T-cell (primary cell): ENCODE measurements at regions of chr19 and their contacts with region 1.

Region 1: DNA sequence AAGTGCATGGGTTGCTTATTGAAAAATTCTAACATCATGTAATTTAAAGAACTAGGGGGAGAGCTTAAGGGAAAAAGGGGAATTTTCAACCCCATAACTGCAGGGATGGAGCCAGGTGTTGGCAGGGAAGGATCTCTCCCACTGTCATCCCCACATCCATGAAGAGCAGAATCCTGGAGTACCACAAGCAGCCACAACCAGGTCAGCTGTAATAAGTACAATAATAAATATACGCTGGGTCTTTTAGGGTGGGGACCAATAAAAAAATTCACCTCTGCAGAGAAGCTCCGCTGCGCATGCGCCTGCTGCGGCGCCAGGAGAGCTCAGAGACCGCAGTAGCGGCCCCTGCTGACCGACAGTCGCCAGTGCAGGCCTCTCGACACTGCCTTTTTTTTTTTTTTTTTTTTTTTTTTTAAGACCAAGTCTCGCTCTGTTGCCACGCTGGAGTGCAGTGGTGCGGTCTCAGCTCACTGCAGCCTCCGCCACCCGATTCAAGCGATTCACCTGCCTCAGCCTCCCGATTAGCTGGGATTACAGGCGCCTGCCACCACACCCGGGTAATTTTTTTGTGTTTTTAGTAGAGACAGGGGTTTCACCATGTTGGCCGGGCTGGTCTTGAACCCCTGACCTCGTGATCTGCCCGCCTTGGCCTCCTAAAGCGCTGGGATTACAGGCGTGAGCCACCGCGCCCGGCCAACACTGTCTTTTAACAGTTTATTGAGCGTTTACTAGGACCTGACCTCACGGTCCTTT is 2.5 kb upstream of the EEF2 start:
- DNase-seq: peak; percentile 78 to 96 (median 87)
- ATAC-seq: peak; percentile 29 to 50 (median 31)
- H3K4me3 ChIP-seq: peak overlapping the region; percentile 89 to 90
- H3K4me3 Mint-ChIP-seq: peak overlapping the region; percentile 75 to 95 (median 92)
- H3K27ac ChIP-seq: peak overlapping the region; percentile 52
- H3K27ac Mint-ChIP-seq: peak overlapping the region; percentile 82 to 85
- H3K4me1 ChIP-seq: peaks cover 26 to 52% of the 10 kb centered on the region in 2 experiments
- H3K4me1 Mint-ChIP-seq: peaks cover 48 to 52% (median 49%) of the 10 kb centered on the region in 3 donors
- H3K27me3 ChIP-seq: no peaks in the 10 kb centered on the region
- H3K27me3 Mint-ChIP-seq: no peaks in the 10 kb centered on the region

Region 2: DNA sequence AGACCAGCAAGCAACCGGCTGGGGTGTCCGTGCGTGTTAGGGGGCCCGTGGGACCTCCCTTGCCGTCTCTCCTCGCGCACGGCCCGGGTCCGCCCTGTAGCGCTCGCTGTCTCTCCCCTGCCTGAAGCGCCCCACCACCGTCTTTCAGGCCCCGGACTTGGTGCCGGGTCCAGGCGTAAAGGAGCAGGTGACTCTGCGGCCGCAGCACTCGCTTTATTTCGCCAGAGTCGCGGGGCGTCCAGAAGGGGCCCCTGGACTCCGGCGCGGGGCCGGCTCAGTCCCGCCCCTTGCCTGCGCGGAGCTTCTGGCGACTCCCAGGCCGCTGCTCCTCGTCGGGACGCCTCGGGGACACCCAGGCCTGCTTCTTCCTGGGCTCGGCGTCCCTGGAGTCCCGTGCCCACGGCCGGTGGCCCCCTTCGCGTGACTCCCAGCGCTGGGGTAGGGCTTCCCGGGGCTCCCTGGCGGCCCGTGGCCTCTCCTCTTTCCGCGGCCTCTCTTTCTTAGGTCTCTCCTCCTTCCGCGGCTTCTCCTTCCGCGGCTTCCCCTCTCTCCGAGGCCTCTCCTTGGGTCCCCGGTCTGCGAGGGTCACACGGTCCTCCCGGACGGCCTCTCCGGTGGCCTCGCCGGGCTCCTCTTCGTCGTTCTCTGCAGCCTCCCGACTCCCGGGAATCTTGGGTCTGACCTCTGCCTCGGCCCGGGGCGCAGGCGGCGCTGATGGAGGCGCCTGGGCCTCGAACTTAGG is 1735.6 kb before region 1 on chr19:
- CTCF ChIA-PET with region 1: interaction called in 1 of 2 experiments, 10 read pairs
- POLR2A ChIA-PET with region 1: no interaction called
- DNase-seq: no peak
- ATAC-seq: no peak
- H3K4me3 ChIP-seq: peak overlapping the region; percentile 52 to 67
- H3K4me3 Mint-ChIP-seq: peak overlapping the region; percentile 71 to 81 (median 73)
- H3K27ac ChIP-seq: no peak overlapping the region
- H3K27ac Mint-ChIP-seq: no peak overlapping the region
- H3K4me1 ChIP-seq: peaks cover 5 to 58% of the 10 kb centered on the region in 2 experiments
- H3K4me1 Mint-ChIP-seq: peaks cover 9 to 29% (median 11%) of the 10 kb centered on the region in 3 donors
- H3K27me3 ChIP-seq: peaks cover 0 to 50% of the 10 kb centered on the region in 2 experiments
- H3K27me3 Mint-ChIP-seq: peaks cover 0 to 16% of the 10 kb centered on the region in 2 donors

Region 3: GRCh38 chr19:3950871-3951861 is 36.6 kb before region 1 on chr19:
- CTCF ChIA-PET with region 1: no interaction called
- POLR2A ChIA-PET with region 1: interaction called in 1 of 2 experiments, 13 read pairs
- DNase-seq: peak in 3 of 35 experiments; percentile 3 to 20 (median 10)
- ATAC-seq: peak in 3 of 4 experiments; percentile 32 to 64 (median 42)
- H3K4me3 ChIP-seq: peak overlapping the region; percentile 9 to 58
- H3K4me3 Mint-ChIP-seq: peak overlapping the region; percentile 34 to 81 (median 70)
- H3K27ac ChIP-seq: no peak overlapping the region
- H3K27ac Mint-ChIP-seq: peak overlapping the region in 1 of 2 donors; percentile 90
- H3K4me1 ChIP-seq: peaks cover 2 to 20% of the 10 kb centered on the region in 2 experiments
- H3K4me1 Mint-ChIP-seq: peaks cover 5 to 10% (median 9%) of the 10 kb centered on the region in 3 donors
- H3K27me3 ChIP-seq: peaks cover 0 to 38% of the 10 kb centered on the region in 2 experiments
- H3K27me3 Mint-ChIP-seq: peaks cover 0 to 9% of the 10 kb centered on the region in 2 donors

Region 4: DNA sequence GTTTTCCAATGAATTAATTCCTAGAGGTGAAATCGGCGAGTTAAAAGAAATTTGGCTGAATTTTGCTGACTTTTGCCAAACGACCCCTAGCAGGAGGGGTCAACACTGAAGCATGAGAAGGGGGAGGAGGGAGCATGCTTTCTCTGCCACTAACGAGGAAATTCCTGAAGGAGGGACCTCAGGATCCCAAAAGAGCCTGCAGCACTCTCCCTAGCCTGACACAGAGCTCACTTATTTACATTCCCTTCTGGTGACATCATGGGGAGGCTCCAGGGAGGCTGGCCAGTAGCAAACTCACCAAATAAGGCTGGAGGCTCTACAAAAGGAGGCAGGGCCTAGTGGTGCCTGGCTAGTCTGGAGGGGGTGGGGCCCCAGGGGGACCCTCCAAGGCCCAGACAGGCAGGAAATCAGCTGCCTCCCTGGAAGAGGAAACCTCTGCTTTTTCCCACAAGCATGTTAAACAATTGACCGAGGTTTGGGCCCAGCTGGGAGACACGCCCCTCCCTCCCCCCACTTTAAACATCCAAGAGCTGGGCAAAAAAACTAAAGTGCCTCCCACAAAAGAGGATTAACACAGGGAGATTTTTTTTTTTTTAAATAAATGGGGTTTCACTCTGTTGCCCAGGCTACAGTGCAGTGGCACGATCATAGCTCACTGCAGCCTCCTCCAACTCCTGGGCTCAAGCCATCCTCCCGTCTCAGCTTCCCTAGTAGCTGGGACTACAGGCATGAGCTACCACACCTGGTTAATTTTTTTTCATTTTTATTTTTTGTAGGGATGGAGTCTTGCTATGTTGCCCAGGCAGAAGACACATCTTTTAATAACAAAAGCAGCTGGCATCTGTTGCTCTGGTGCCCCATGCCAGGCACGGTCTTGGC is 19.0 kb before region 1 on chr19:
- CTCF ChIA-PET with region 1: interaction called, 6 to 7 read pairs
- POLR2A ChIA-PET with region 1: interaction called, 5 to 11 read pairs
- DNase-seq: no peak
- ATAC-seq: no peak
- H3K4me3 ChIP-seq: no peak overlapping the region
- H3K4me3 Mint-ChIP-seq: peak overlapping the region; percentile 82 to 88 (median 87)
- H3K27ac ChIP-seq: no peak overlapping the region
- H3K27ac Mint-ChIP-seq: no peak overlapping the region
- H3K4me1 ChIP-seq: peaks cover 4 to 33% of the 10 kb centered on the region in 2 experiments
- H3K4me1 Mint-ChIP-seq: peaks cover 19 to 34% (median 30%) of the 10 kb centered on the region in 3 donors
- H3K27me3 ChIP-seq: no peaks in the 10 kb centered on the region
- H3K27me3 Mint-ChIP-seq: no peaks in the 10 kb centered on the region

Region 5: GRCh38 chr19:4088878-4089361 is 101.1 kb after region 1 on chr19:
- CTCF ChIA-PET with region 1: interaction called in 1 of 2 experiments, 3 read pairs
- POLR2A ChIA-PET with region 1: interaction called in 1 of 2 experiments, 12 read pairs
- DNase-seq: peak in 33 of 35 experiments; percentile 23 to 82 (median 48)
- ATAC-seq: peak; percentile 73 to 77 (median 74)
- H3K4me3 ChIP-seq: peak overlapping the region in 1 of 2 donors; percentile 39
- H3K4me3 Mint-ChIP-seq: peak overlapping the region; percentile 41 to 73 (median 59)
- H3K27ac ChIP-seq: peak overlapping the region; percentile 74
- H3K27ac Mint-ChIP-seq: peak overlapping the region; percentile 95 to 96
- H3K4me1 ChIP-seq: peaks cover 39 to 61% of the 10 kb centered on the region in 2 experiments
- H3K4me1 Mint-ChIP-seq: peaks cover 43 to 59% (median 51%) of the 10 kb centered on the region in 3 donors
- H3K27me3 ChIP-seq: no peaks in the 10 kb centered on the region
- H3K27me3 Mint-ChIP-seq: no peaks in the 10 kb centered on the region

Region 6: DNA sequence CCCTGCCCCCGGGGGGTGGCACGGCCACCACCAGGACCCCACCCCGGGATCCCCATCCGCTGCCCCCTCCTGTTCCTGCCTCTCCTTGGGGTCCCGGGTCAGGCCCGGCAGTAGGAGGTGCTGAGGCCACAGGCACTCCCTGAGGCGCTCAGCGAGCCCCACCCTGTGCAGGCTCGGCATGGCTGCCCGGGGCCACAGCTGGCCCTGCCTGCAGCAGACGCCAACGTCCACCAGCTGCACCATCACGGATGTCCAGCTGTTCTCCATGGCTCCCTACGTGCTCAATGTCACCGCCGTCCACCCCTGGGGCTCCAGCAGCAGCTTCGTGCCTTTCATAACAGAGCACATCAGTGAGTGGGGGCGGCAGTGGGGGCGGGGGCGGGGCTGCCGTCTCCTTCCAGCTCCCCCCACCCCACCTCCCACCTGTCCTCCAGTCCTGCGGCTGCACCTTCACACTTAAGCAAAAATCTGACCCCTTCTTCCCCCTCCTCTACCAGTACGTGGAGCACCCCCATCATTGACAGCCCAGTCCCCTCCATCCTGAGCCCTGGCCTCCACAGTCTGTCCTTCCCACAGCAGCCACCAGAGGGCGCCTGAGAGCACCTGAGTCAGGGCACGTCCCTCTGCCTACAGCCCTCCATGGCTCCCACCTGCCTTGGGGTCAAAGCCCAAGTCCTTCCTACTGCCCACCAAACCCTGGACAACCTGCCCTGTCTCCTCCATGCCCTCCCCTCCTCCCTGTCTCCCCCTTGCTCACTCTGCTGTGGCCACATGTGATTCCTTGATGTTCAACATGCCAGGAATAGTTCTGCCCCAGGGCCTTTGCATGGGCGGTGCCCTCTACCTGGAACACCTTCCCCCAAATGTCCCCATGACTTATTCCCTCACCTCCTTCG is 245.4 kb after region 1 on chr19:
- CTCF ChIA-PET with region 1: no interaction called
- POLR2A ChIA-PET with region 1: no interaction called
- DNase-seq: peak in 34 of 35 experiments; percentile 26 to 72 (median 54)
- ATAC-seq: peak in 3 of 4 experiments; percentile 45 to 69 (median 66)
- H3K4me3 ChIP-seq: no peak overlapping the region
- H3K4me3 Mint-ChIP-seq: no peak overlapping the region
- H3K27ac ChIP-seq: no peak overlapping the region
- H3K27ac Mint-ChIP-seq: no peak overlapping the region
- H3K4me1 ChIP-seq: peaks cover 0 to 8% of the 10 kb centered on the region in 2 experiments
- H3K4me1 Mint-ChIP-seq: peaks cover 0 to 3% (median 0%) of the 10 kb centered on the region in 3 donors
- H3K27me3 ChIP-seq: peaks cover 3 to 75% of the 10 kb centered on the region in 2 experiments
- H3K27me3 Mint-ChIP-seq: peaks cover 10 to 32% of the 10 kb centered on the region in 2 donors

Region 7: GRCh38 chr19:4379355-4380253 is 391.8 kb after region 1 on chr19:
- CTCF ChIA-PET with region 1: interaction called in 1 of 2 experiments, 17 read pairs
- POLR2A ChIA-PET with region 1: no interaction called
- DNase-seq: peak in 14 of 35 experiments; percentile 8 to 48 (median 22)
- ATAC-seq: peak; percentile 50 to 58 (median 52)
- H3K4me3 ChIP-seq: peak overlapping the region; percentile 17 to 45
- H3K4me3 Mint-ChIP-seq: peak overlapping the region; percentile 74 to 83 (median 77)
- H3K27ac ChIP-seq: peak overlapping the region; percentile 86
- H3K27ac Mint-ChIP-seq: peak overlapping the region; percentile 94 to 96
- H3K4me1 ChIP-seq: peaks cover 22 to 68% of the 10 kb centered on the region in 2 experiments
- H3K4me1 Mint-ChIP-seq: peaks cover 49 to 69% (median 57%) of the 10 kb centered on the region in 3 donors
- H3K27me3 ChIP-seq: no peaks in the 10 kb centered on the region
- H3K27me3 Mint-ChIP-seq: no peaks in the 10 kb centered on the region

Region 8: GRCh38 chr19:5394551-5395505 is 1407.0 kb after region 1 on chr19:
- CTCF ChIA-PET with region 1: no interaction called
- POLR2A ChIA-PET with region 1: no interaction called
- DNase-seq: no peak
- ATAC-seq: no peak
- H3K4me3 ChIP-seq: no peak overlapping the region
- H3K4me3 Mint-ChIP-seq: no peak overlapping the region
- H3K27ac ChIP-seq: no peak overlapping the region
- H3K27ac Mint-ChIP-seq: no peak overlapping the region
- H3K4me1 ChIP-seq: peaks cover 0 to 3% of the 10 kb centered on the region in 2 experiments
- H3K4me1 Mint-ChIP-seq: peaks cover 0 to 5% (median 0%) of the 10 kb centered on the region in 3 donors
- H3K27me3 ChIP-seq: peaks cover 7 to 70% of the 10 kb centered on the region in 2 experiments
- H3K27me3 Mint-ChIP-seq: peaks cover 42 to 74% of the 10 kb centered on the region in 2 donors